OCI-LY7 (cell line): ENCODE measurements at regions of chr15 and their contacts with region 1.

Region 1: GRCh38 chr15:66497502-66498455 is at the start of gene SNAPC5:
- DNase-seq: peak; percentile 95
- H3K4me3 ChIP-seq: peak within 1 kb of the TSS; percentile 87
- H3K27ac ChIP-seq: peak within 1 kb of the TSS; percentile 85
- H3K4me1 ChIP-seq: peaks cover 55% of the 10 kb centered on the region
- CTCF ChIP-seq: peak; percentile 99
- total RNA-seq, gene SNAPC5: 30.7 and 32.6 TPM in 2 replicates

Region 2: DNA sequence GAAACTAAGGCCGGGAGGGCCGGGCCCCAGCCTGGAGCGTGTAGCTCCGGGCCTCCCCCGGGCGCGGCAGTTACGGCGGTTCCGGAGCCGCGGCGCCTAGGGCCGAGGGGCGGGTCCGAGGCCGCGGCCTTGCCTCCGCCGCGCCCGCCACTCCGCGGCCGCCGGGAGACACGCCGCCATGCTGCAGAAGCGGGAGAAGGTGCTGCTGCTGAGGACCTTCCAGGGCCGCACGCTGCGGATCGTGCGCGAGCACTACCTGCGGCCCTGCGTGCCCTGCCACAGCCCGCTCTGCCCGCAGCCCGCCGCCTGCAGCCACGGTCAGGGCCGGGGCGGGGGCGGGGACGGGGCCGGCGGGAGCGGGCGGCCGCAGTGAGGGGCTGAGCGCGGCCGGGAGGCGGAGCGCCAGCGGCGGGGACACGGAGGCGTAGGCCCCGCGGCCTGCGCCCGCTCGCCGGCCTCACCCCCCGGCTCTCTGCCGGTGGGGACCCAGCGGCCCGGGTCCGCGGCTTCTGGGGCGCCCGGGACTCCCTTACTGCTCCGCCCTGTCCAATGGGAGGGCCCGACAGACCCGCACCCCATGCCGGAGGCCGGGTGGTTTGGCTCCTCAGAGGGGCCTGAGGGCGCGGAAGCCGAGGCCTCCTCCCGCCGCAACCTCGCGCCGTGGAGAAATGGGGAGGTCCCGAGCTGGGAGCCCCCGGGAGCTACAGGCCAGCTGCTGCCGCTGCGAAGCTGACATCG is 204.2 kb before region 1 on chr15 and contains the start of gene DIS3L:
- CTCF ChIA-PET with region 1: no interaction called
- POLR2A ChIA-PET with region 1: interaction called, 3 read pairs
- intact Hi-C with region 1: loop called (anchors 2 kb)
- DNase-seq: peak; percentile 87
- H3K4me3 ChIP-seq: peak within 1 kb of the TSS; percentile 69
- H3K27ac ChIP-seq: peak within 1 kb of the TSS; percentile 88
- H3K4me1 ChIP-seq: peaks cover 44% of the 10 kb centered on the region
- CTCF ChIP-seq: no peak
- total RNA-seq, gene DIS3L: 33.9 and 41.2 TPM in 2 replicates

Region 3: DNA sequence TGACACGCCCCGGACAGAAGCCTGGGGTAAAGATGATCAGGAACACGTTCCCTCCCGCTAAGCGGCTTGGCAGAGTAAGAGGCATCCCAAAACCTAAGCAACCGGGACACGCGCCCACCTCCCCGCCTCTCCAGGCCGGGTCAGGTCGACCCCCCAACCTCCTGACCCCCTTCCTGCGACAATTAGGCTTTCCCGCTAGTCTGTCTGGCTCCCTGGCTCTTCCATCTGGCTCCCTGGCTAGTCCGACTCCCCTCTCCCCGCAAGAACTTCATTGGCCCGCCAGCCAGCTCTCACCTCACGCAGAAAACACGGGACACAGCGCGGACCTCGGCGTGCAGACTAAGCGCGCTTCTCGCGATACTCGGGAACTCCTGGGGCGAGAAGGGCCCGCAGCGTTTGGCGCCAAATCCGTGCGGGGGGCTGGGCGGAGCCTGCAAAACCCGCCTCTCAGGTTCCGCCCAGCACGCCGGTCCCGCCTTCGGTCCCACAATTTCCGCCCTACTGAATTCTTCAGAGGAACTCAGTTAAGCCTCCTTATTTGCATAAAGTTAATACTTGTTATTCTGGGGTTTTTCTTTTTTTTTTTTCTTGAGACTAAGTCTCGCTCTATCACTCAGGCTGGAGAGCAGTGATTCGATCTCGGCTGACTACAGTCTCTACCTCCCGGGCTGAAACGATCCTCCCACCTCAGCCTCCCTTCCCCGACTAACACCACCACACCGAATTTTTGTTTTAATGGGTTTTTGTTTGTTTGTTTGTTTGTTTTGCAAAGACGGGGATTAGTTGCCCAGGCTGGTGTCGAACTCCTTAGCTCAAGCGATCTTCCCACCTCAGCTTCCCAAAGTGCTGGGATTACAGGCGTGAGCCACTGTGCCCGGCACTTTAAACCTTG is 141.2 kb before region 1 on chr15 and contains the start of gene TIPIN:
- CTCF ChIA-PET with region 1: no interaction called
- POLR2A ChIA-PET with region 1: interaction called, 7 read pairs
- intact Hi-C with region 1: loop called (anchors 5 kb)
- DNase-seq: peak; percentile 99
- H3K4me3 ChIP-seq: peak within 1 kb of the TSS; percentile 87
- H3K27ac ChIP-seq: peak within 1 kb of the TSS; percentile 84
- H3K4me1 ChIP-seq: peaks cover 50% of the 10 kb centered on the region
- CTCF ChIP-seq: no peak
- total RNA-seq, gene TIPIN: 26.0 and 28.6 TPM in 2 replicates

Region 4: DNA sequence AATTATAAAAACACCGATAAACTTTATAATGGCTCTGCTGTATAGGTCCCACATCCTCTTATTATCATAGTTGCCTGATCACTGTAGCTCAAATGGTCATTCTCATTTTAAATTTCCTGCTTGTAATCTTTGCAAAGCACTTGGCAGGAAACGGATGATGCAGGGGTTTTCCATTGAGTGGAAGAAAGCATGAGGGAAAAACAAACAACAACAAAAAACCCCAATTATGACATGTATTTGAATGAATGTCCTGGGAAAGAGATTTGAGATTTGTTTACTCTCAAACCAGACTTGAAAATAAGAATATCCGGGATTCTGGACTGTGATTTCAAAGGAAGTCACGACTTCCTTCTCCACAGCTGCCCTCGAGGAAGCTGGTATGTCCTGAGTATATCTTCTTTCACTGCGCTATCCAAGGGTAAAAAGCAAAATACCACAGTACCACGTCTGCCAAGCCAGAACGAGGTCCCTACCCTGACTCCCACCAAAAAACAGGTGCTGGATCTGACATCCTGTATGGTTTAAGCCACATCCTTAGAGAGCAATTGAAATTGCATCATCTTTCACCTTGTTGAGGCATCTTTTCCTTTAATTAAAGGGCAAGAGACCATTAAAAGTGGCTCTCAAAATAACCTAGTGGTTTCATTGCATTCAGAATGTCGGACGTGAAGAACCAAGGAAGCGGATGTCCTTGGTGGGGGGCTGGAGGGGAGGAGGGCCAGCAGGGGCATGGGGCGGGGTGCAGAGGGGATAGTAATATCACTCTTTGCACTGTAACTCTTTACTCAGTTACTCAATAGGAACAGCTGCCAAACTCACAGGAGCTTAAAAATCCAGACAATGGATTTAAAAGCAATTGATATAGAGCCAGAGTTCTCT is 127.8 kb before region 1 on chr15:
- CTCF ChIA-PET with region 1: no interaction called
- POLR2A ChIA-PET with region 1: no interaction called
- intact Hi-C with region 1: loop called (anchors 5 kb)
- DNase-seq: peak; percentile 82
- H3K4me3 ChIP-seq: peak overlapping the region; percentile 58
- H3K27ac ChIP-seq: peak overlapping the region; percentile 78
- H3K4me1 ChIP-seq: peaks cover 36% of the 10 kb centered on the region
- CTCF ChIP-seq: no peak